AG04450 (cell line): ENCODE measurements at regions of chr2 and their contacts with region 1.

Region 1: GRCh38 chr2:171785450-171785849 is 98.2 kb downstream of the DYNC1I2 start:
- DNase-seq: no peak
- H3K4me3 ChIP-seq: no peak overlapping the region
- H3K27ac ChIP-seq: no peak overlapping the region
- H3K27me3 ChIP-seq: no peaks in the 10 kb centered on the region
- CTCF ChIP-seq: no peak

Region 2: DNA sequence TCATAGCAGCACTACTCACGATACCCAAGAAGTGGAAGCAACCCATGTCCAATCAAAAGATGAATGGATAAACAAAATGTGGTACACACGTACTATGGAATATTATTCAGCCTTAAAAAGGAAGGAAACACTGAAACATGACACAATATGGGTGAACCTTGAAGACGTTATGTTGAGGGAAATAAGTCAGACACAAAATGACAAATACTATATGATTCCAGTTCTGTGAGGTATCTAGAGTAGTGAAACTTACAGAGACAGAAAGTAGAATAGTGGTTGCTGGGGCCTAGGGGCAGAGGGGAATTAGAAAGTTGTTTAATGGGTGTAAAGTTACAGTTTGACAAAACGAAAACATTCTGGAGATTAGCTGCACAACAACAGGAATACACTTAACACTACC is 649.4 kb before region 1 on chr2:
- CTCF ChIA-PET with region 1: no interaction called
- POLR2A ChIA-PET with region 1: interaction called, 10 read pairs
- DNase-seq: no peak
- H3K4me3 ChIP-seq: no peak overlapping the region
- H3K27ac ChIP-seq: no peak overlapping the region
- H3K27me3 ChIP-seq: no peaks in the 10 kb centered on the region
- CTCF ChIP-seq: no peak

Region 3: DNA sequence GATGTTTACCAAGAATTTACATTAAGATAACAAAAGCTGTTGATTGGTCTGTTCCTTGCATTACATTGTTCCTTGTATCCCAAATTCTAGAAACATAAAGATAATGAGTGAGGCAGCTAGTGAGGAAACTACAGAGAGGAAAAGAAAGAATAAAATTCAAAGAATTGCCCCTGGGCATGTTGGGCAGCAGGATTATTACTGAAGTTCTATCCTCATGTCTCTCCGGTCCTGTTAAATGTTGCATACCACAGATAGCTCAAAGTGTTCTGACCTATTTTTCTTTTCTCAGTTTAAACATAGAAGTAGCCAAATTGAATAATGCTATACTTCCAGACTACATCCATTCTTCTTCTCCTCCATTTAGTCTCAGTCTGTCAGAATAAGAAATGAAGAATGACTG is 156.3 kb before region 1 on chr2:
- CTCF ChIA-PET with region 1: no interaction called
- POLR2A ChIA-PET with region 1: no interaction called
- DNase-seq: no peak
- H3K4me3 ChIP-seq: no peak overlapping the region
- H3K27ac ChIP-seq: no peak overlapping the region
- H3K27me3 ChIP-seq: peaks cover 6% of the 10 kb centered on the region
- CTCF ChIP-seq: no peak